PC-3 (cell line): ENCODE measurements at regions of chr7 and their contacts with region 1.

Region 1: DNA sequence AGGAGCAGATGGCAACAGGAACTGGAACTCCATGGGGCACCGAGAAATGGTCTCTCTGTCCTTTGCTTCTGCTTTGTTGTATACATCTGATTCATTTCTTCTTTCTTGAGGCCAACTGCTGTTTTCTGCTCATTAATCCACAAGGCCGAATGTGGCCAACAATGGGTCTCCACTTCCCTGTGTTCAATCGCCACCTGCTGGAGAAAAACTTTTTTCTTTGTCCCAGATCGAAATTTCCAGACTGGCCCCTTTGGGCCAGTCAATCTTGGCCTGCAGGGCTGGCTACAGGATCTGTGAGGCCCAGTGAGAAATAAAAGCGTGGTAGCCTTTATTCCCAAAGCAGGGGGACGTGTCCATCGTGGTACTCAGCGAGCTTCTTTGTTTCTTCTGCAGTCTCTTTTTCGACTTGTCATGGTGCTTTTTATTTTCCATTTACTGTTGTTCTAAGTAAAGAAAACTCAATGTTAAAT is 58.8 kb downstream of the PARP12 start:
- DNase-seq: peak; percentile 86
- ATAC-seq: peak; percentile 75
- H3K4me3 ChIP-seq: no peak overlapping the region
- H3K27ac ChIP-seq: no peak overlapping the region
- H3K4me1 ChIP-seq: no peaks in the 10 kb centered on the region
- H3K27me3 ChIP-seq: no peaks in the 10 kb centered on the region
- CTCF ChIP-seq: peak; percentile 84

Region 2: GRCh38 chr7:139602143-139602722 is 401.7 kb before region 1 on chr7:
- CTCF ChIA-PET with region 1: interaction called, 5 read pairs
- POLR2A ChIA-PET with region 1: no interaction called
- intact Hi-C with region 1: loop called (anchors 1 kb)
- DNase-seq: peak; percentile 39
- ATAC-seq: peak; percentile 70
- H3K4me3 ChIP-seq: no peak overlapping the region
- H3K27ac ChIP-seq: no peak overlapping the region
- H3K4me1 ChIP-seq: 0 out of 2 replicates have a peak, but pooled peaks cover 7% of the 10 kb centered on the region
- H3K27me3 ChIP-seq: no peaks in the 10 kb centered on the region
- CTCF ChIP-seq: peak; percentile 61

Region 3: GRCh38 chr7:139645572-139646523 is 358.1 kb before region 1 on chr7:
- CTCF ChIA-PET with region 1: interaction called, 8 read pairs
- POLR2A ChIA-PET with region 1: no interaction called
- intact Hi-C with region 1: loop called (anchors 1 kb)
- DNase-seq: peak; percentile 81
- ATAC-seq: peak; percentile 67
- H3K4me3 ChIP-seq: no peak overlapping the region
- H3K27ac ChIP-seq: peak overlapping the region; percentile 51
- H3K4me1 ChIP-seq: peaks cover 17% of the 10 kb centered on the region; the same call in 1 of the 2 replicates
- H3K27me3 ChIP-seq: no peaks in the 10 kb centered on the region
- CTCF ChIP-seq: peak; percentile 88

Region 4: GRCh38 chr7:139915864-139916716 is 87.9 kb before region 1 on chr7:
- CTCF ChIA-PET with region 1: interaction called, 3 read pairs
- POLR2A ChIA-PET with region 1: interaction called, 3 read pairs
- intact Hi-C with region 1: loop called (anchors 2 kb)
- DNase-seq: peak; percentile 98
- ATAC-seq: peak; percentile 83
- H3K4me3 ChIP-seq: no peak overlapping the region
- H3K27ac ChIP-seq: peak overlapping the region; percentile 96
- H3K4me1 ChIP-seq: peaks cover 42% of the 10 kb centered on the region
- H3K27me3 ChIP-seq: no peaks in the 10 kb centered on the region
- CTCF ChIP-seq: no peak